ENCODE measurements at regions of chr5 and their contacts with region 1.

Region 1: GRCh38 chr5:14727428-14727865 is 62.9 kb downstream of the OTULIN start:
- DNase-seq: peak; percentile 80 to 84
- ATAC-seq: peak; percentile 49 to 86 (median 74)
- H3K4me3 ChIP-seq: no peak overlapping the region
- H3K27ac ChIP-seq: peak overlapping the region in 5 of 10 donors; percentile 12 to 64 (median 39)
- H3K4me1 ChIP-seq: peaks cover 6 to 57% (median 22%) of the 10 kb centered on the region in 9 donors
- H3K27me3 ChIP-seq: no peaks in the 10 kb centered on the region
- CTCF ChIP-seq: peak; percentile 91 to 98 (median 96)

Region 2: DNA sequence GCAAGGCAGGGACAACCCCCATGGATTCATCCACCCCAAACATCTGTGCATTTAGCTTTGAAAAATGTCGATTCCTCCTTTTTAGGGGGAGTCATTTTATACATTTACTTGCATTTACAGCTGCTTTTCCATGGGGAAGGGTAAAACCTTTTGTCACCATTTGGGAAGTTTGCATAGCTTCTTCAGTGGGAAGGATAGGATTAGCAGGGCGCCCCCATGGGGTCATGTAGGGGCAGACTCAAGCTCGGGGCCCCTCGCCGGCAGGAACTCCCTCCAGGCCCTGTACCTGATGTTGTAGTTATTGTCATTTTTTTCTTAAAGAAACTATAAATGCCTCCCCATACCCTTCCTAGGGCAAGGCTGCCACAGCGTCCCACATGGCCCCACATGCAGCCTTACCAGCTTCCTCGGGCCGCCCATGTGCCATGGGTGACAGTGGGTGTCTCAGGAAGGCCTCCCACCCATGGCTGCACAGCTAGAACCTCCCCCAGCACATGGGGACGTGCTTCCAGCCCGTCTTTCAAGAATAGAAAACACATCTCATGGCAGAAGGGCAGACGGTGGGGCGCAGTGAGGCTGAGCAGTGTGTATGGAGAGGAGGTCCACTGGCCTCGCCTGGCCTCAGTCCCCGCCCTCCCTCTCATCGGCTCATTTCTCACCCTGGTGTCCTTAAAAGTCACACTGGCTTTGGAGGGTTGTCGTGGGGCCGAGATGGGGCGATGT is 222.0 kb before region 1 on chr5:
- intact Hi-C with region 1: no loop called
- DNase-seq: no peak
- ATAC-seq: no peak
- H3K4me3 ChIP-seq: no peak overlapping the region
- H3K27ac ChIP-seq: peak overlapping the region in 1 of 10 donors; percentile 19
- H3K4me1 ChIP-seq: peaks cover 0 to 8% (median 0%) of the 10 kb centered on the region in 9 donors
- H3K27me3 ChIP-seq: no peaks in the 10 kb centered on the region
- CTCF ChIP-seq: peak in 3 of 9 donors; percentile 9 to 13 (median 12)

Region 3: GRCh38 chr5:14650052-14650451 is 77.4 kb before region 1 on chr5:
- intact Hi-C with region 1: no loop called
- DNase-seq: no peak
- ATAC-seq: no peak
- H3K4me3 ChIP-seq: no peak overlapping the region
- H3K27ac ChIP-seq: no peak overlapping the region
- H3K4me1 ChIP-seq: peaks cover 0 to 5% (median 0%) of the 10 kb centered on the region in 9 donors
- H3K27me3 ChIP-seq: peaks cover 0 to 15% (median 0%) of the 10 kb centered on the region in 7 donors
- CTCF ChIP-seq: no peak

Region 4: GRCh38 chr5:14685757-14686156 is 41.7 kb before region 1 on chr5:
- intact Hi-C with region 1: loop called in 1 of 10 experiments (anchors 5 kb)
- DNase-seq: peak in 1 of 2 donors; percentile 41
- ATAC-seq: peak; percentile 16 to 43 (median 38)
- H3K4me3 ChIP-seq: no peak overlapping the region
- H3K27ac ChIP-seq: peak overlapping the region in 7 of 10 donors; percentile 33 to 87 (median 70)
- H3K4me1 ChIP-seq: peaks cover 0 to 66% (median 20%) of the 10 kb centered on the region in 9 donors
- H3K27me3 ChIP-seq: no peaks in the 10 kb centered on the region
- CTCF ChIP-seq: peak in 8 of 9 donors; percentile 30 to 75 (median 68)

Region 5: GRCh38 chr5:14879937-14880589 is 152.6 kb after region 1 on chr5:
- intact Hi-C with region 1: loop called in 2 of 10 experiments (anchors 5 to 10 kb)
- DNase-seq: no peak
- ATAC-seq: no peak
- H3K4me3 ChIP-seq: no peak overlapping the region
- H3K27ac ChIP-seq: no peak overlapping the region
- H3K4me1 ChIP-seq: peaks cover 0 to 55% (median 29%) of the 10 kb centered on the region in 9 donors
- H3K27me3 ChIP-seq: no peaks in the 10 kb centered on the region
- CTCF ChIP-seq: no peak

Measured in heart right ventricle (tissue), 16 donors.